ENCODE measurements at regions of chr11 and their contacts with region 1.

Region 1: GRCh38 chr11:64846998-64847666 is 2.7 kb upstream of the CDC42BPG start:
- DNase-seq: peak; percentile 88
- H3K4me3 ChIP-seq: no peak overlapping the region
- H3K27ac ChIP-seq: peak overlapping the region; percentile 92
- H3K4me1 ChIP-seq: peaks cover 73% of the 10 kb centered on the region
- CTCF ChIP-seq: peak; percentile 93

Region 2: DNA sequence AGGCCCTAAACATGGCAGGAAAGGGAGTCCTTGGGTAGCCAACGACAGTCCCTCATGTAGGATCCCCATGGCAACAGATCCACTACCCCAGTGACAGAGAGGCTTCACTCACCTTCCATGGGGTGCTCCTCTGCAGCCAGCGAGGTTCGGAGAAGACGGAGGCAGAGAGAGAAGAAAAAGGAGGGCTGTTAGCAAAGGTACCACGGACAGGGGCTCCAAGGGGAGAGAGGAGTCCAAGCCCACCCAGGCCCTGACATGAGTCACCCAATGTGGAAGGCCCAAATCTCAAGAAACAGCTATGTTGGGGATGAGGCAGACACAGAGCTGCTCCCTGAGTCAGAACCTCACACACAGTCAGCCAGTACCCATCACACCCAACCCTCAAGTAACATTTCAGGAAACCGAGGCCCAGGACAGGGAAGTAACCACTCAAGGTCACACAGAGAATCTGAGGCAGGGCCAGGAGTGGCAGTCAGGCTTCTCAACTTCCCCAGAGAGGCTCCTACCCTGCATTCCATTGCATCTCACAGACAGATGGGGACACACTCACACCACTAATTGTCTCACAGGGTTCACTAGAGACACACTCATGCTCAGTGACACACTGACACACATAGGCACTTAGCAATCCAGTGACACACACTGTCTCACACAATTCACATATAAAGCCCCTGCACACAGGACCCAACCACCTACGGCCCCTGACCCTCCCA is 149.3 kb before region 1 on chr11:
- CTCF ChIA-PET with region 1: no interaction called
- POLR2A ChIA-PET with region 1: no interaction called
- intact Hi-C with region 1: no loop called
- DNase-seq: no peak
- H3K4me3 ChIP-seq: no peak overlapping the region
- H3K27ac ChIP-seq: no peak overlapping the region
- H3K4me1 ChIP-seq: peaks cover 29% of the 10 kb centered on the region
- CTCF ChIP-seq: no peak

Region 3: GRCh38 chr11:64803163-64803845 is 43.8 kb before region 1 on chr11 and contains the start of gene MAP4K2:
- CTCF ChIA-PET with region 1: interaction called, 3 read pairs
- POLR2A ChIA-PET with region 1: interaction called, 11 read pairs
- intact Hi-C with region 1: loop called (anchors 1 kb)
- DNase-seq: peak; percentile 91
- H3K4me3 ChIP-seq: peak within 1 kb of the TSS; percentile 78
- H3K27ac ChIP-seq: peak within 1 kb of the TSS; percentile 82
- H3K4me1 ChIP-seq: peaks cover 50% of the 10 kb centered on the region
- CTCF ChIP-seq: peak; percentile 61; the same call in 1 of the 2 replicates
- total RNA-seq, gene MAP4K2: 109 and 115 TPM in 2 replicates

Region 4: GRCh38 chr11:64834723-64835620 is 12.2 kb before region 1 on chr11:
- CTCF ChIA-PET with region 1: no interaction called
- POLR2A ChIA-PET with region 1: no interaction called
- intact Hi-C with region 1: no loop called
- DNase-seq: no peak
- H3K4me3 ChIP-seq: no peak overlapping the region
- H3K27ac ChIP-seq: no peak overlapping the region
- H3K4me1 ChIP-seq: no peaks in the 10 kb centered on the region
- CTCF ChIP-seq: no peak

Region 5: DNA sequence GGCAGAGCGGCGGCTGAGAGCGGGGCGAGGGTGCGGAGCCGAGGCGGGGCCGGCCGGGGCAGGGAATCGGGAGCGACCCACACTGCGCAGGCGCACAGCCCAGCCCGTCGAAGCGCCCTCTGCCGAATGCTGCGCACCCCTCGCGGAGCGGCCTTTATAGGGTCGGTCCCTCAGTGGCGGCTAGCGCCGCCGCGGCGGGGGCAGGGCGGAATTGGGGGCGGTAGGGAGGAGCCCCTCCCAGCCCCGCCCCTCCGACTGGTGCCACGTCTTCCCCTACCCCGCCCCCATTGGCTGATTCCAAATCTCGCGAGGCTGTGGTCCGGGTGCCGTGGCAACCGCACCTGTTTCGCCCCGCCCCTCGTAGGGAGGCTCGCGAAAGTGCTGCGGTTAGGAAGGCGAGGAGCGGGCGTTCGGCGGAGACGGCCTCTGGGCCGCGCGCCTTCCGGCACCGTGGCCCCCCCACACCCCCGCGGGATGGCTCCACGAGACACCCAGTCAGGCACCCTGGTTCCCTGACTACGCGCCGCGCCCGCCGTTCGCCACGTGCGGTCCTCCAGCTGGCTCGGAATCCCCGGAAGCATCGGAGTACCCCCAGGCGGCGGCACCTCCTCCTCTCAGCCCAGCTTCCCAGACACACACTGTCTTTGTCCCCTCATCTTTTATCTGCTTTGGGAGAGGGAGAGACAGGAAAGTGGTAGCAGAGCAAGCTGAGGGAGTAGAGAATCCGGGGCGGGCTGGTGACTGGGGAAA is 31.5 kb after region 1 on chr11 and contains the start of gene EHD1:
- CTCF ChIA-PET with region 1: interaction called, 9 read pairs
- POLR2A ChIA-PET with region 1: interaction called, 90 read pairs
- intact Hi-C with region 1: loop called (anchors 1 kb)
- DNase-seq: peak; percentile 100
- H3K4me3 ChIP-seq: peak within 1 kb of the TSS; percentile 89
- H3K27ac ChIP-seq: peak within 1 kb of the TSS; percentile 97
- H3K4me1 ChIP-seq: peaks cover 76% of the 10 kb centered on the region
- CTCF ChIP-seq: peak; percentile 72
- total RNA-seq, gene EHD1: 101 and 107 TPM in 2 replicates

Region 6: DNA sequence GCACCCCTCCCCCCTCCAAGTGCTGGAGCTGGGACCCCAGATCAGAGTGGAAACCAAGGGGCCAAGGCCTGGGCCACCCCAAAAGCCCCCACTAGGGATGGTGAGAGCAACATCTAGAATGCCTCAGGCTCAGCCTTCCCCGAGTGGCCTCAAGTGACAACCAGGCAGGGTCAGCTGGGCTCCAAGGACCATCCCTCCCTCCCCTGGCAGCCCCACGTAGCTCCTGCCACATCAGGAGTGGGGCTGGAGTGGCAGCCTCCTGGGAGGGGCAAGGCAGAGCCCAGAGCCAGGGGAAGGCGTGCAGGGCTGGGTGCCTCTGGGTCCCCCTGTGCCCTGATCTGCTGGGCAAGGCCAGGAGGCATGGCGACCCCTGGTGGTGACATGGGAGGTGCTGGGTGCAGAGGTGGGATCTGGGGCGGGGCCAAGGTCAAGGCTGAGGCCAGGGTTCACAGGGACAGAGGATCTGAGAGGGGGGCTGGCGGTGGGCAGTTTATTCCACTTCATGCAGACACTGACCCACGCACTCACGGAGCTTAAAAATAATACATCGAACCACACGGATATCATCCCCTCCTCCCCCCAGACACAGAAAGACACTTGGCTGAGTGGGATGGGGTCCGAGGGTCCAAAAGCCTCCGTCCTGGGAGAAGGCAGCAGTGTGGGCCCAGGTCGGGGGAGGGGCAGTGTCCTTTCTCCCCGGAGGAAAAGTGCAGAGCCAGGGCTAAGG is 47.1 kb after region 1 on chr11:
- CTCF ChIA-PET with region 1: interaction called, 9 read pairs
- POLR2A ChIA-PET with region 1: interaction called, 7 read pairs
- intact Hi-C with region 1: loop called (anchors 1 kb)
- DNase-seq: peak; percentile 90
- H3K4me3 ChIP-seq: no peak overlapping the region
- H3K27ac ChIP-seq: no peak overlapping the region
- H3K4me1 ChIP-seq: peaks cover 7% of the 10 kb centered on the region
- CTCF ChIP-seq: peak; percentile 94

Region 7: GRCh38 chr11:65027213-65028067 is 180.3 kb after region 1 on chr11 and contains the start of gene SNX15:
- CTCF ChIA-PET with region 1: interaction called, 3 read pairs
- POLR2A ChIA-PET with region 1: interaction called, 3 read pairs
- intact Hi-C with region 1: loop called (anchors 5 kb)
- DNase-seq: peak; percentile 99
- H3K4me3 ChIP-seq: peak within 1 kb of the TSS; percentile 66
- H3K27ac ChIP-seq: peak within 1 kb of the TSS; percentile 75
- H3K4me1 ChIP-seq: peaks cover 18% of the 10 kb centered on the region
- CTCF ChIP-seq: peak; percentile 57
- total RNA-seq, gene SNX15: 25.9 and 31.6 TPM in 2 replicates

Region 8: GRCh38 chr11:65040847-65041621 is 193.9 kb after region 1 on chr11 and contains the start of gene SAC3D1:
- CTCF ChIA-PET with region 1: no interaction called
- POLR2A ChIA-PET with region 1: no interaction called
- intact Hi-C with region 1: no loop called
- DNase-seq: peak; percentile 94
- H3K4me3 ChIP-seq: peak within 1 kb of the TSS; percentile 76
- H3K27ac ChIP-seq: peak within 1 kb of the TSS; percentile 84
- H3K4me1 ChIP-seq: peaks cover 36% of the 10 kb centered on the region
- CTCF ChIP-seq: no peak
- total RNA-seq, gene SAC3D1: 23.3 and 28.2 TPM in 2 replicates

Region 9: DNA sequence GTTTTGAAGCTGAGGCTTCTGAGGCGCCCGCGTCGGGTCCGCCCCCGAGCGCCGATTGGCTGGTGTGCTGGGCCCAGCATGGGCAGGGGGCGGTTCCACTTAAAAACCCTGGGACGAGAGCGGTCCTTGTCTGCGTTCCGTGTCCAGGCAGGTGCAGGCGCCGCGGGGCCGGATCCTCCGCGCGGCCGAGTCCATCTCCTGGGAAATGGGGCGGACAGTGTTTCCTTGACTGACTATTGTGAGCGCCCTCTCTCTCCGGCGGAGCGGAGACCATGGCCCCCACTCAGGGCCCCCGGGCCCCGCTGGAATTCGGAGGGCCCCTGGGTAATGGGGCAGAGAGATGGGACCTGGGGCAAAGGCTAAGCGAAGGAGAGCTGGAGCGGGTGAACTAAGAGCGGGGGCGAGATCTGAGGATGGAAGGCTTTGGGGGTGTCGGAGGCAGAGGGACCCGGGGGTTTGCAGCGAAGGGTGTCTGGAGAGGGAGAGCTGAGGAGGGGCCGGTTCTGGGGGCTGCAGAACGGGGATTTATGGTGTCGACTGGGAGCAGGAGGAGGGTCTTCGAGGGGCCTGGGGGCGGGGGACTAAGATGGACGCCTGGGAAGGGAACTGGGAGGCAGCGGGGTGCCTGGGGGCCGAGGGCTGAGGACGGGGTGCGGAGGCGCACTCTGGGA is 264.7 kb after region 1 on chr11 and contains the start of gene TM7SF2:
- CTCF ChIA-PET with region 1: interaction called, 3 read pairs
- POLR2A ChIA-PET with region 1: no interaction called
- intact Hi-C with region 1: loop called (anchors 1 kb)
- DNase-seq: peak; percentile 97
- H3K4me3 ChIP-seq: peak within 1 kb of the TSS; percentile 69
- H3K27ac ChIP-seq: peak within 1 kb of the TSS; percentile 73
- H3K4me1 ChIP-seq: peaks cover 55% of the 10 kb centered on the region
- CTCF ChIP-seq: no peak
- total RNA-seq, gene TM7SF2: 25.8 and 30.1 TPM in 2 replicates

Region 10: DNA sequence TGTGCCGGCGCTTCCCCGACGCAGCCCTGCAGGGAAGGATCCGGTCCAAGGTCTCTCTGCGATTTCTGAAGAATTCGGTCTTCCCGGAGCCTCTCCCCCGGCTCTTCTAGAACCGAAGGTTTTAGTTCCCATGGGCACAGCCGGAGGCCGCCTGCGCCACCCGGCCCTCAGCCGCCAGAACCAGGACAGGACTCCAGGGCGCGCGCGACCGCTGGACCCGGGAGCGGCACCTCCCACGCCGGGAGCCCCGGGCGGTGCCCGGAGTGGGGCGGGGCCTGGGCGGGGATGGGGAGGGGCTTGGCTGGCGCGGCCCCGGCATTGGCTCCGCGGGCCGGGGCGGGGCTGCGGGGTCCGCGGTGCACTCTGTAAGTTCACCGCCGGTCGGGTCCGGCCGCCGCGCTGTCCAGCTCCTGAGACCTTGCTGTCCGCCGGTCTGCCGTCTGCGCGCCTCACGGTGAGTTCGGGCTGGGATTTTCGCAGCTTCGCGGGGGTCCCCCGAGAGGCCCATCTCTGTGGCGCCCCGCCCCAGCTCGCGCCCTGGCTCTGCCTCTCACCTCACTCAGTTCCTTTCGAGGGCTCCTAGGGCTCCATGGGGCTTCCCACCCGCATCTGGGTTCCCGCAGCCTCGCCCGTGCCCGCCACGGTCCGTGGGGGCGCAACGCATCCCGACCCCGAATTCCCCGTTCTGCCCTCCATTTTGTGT is 467.5 kb after region 1 on chr11 and contains the start of gene CDC42EP2:
- CTCF ChIA-PET with region 1: no interaction called
- POLR2A ChIA-PET with region 1: no interaction called
- intact Hi-C with region 1: loop called (anchors 10 kb)
- DNase-seq: peak; percentile 74
- H3K4me3 ChIP-seq: peak within 1 kb of the TSS; percentile 74
- H3K27ac ChIP-seq: no peak within 1 kb of the TSS
- H3K4me1 ChIP-seq: peaks cover 9% of the 10 kb centered on the region
- CTCF ChIP-seq: no peak
- total RNA-seq, gene CDC42EP2: not detected in 2 replicates